ENCODE measurements at regions of chr12 and their contacts with region 1.

Region 1: GRCh38 chr12:55996715-55997534 is at the start of gene SUOX:
- DNase-seq: peak in 1 of 5 donors; percentile 6
- H3K4me3 ChIP-seq: peak within 1 kb of the TSS in 1 of 2 donors; percentile 18
- H3K4me3 Mint-ChIP-seq: peak within 1 kb of the TSS in 6 of 8 donors; percentile 2 to 54 (median 46)
- H3K27ac ChIP-seq: no peak within 1 kb of the TSS
- H3K27ac Mint-ChIP-seq: peak within 1 kb of the TSS in 6 of 7 donors; percentile 14 to 92 (median 62)
- H3K4me1 ChIP-seq: peaks cover 16% of the 10 kb centered on the region
- H3K4me1 Mint-ChIP-seq: peaks cover 10 to 23% (median 12%) of the 10 kb centered on the region in 4 donors
- H3K27me3 ChIP-seq: no peaks in the 10 kb centered on the region
- H3K27me3 Mint-ChIP-seq: peaks cover 0 to 1% of the 10 kb centered on the region in 2 donors
- total RNA-seq, gene SUOX: 5.4 to 5.9 TPM

Region 2: GRCh38 chr12:55982319-55982936 is 14.5 kb before region 1 on chr12:
- CTCF ChIA-PET with region 1: interaction called, 36 read pairs
- POLR2A ChIA-PET with region 1: interaction called, 4 read pairs
- intact Hi-C with region 1: no loop called
- DNase-seq: no peak
- H3K4me3 ChIP-seq: no peak overlapping the region
- H3K4me3 Mint-ChIP-seq: no peak overlapping the region
- H3K27ac ChIP-seq: no peak overlapping the region
- H3K27ac Mint-ChIP-seq: peak overlapping the region in 3 of 7 donors; percentile 10 to 56 (median 42)
- H3K4me1 ChIP-seq: peaks cover 8% of the 10 kb centered on the region
- H3K4me1 Mint-ChIP-seq: peaks cover 15 to 29% (median 18%) of the 10 kb centered on the region in 4 donors
- H3K27me3 ChIP-seq: no peaks in the 10 kb centered on the region
- H3K27me3 Mint-ChIP-seq: no peaks in the 10 kb centered on the region

Region 3: DNA sequence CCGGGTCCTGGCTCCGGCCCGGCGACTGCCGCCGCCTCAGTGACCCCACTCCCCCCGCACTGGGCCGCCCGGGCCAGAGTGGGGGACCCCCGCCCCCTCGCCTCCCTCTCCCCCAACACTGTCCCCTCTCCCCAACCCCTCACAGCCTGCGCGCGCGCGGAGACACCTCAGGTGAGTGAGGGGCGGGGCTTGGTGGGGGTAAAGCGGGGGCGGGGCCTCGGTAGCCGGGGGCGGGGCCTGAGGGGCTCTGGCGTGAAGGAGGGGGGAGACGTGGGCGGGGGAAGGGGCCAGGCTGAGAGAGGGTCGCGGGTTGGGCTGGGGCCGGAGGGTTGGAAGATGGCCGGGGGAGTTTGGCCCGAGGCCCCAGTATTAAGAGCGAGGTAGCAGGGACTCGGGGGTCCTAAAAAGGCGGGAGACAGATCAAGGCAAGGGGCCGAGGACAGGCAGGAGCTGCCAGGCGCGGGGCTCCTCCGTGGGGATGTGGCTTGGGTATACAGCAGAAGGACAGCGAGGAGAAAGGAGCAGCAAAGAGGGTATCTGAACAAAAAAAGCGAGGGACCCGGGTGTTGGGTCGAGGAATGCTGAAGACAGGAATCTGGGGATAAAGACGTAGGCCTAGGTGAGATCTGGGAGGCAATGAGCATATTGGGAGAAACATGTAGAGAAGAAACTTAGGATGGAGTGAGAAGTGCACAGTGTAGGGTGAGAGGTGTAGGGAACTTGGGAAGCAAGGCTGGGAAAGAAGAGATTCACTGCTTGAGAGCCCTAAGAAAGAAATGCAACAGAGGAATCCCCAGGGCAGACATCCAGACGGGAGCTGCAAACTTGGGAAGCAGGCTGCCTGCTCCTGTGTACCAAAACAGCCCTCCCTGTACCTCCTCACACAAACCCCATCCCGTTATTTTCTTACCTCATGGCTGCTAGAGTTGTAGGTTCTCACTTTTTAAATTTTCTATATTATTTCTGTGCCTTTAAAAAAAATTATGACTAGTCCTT is 10.9 kb after region 1 on chr12:
- CTCF ChIA-PET with region 1: interaction called, 14 read pairs
- POLR2A ChIA-PET with region 1: interaction called, 9 read pairs
- intact Hi-C with region 1: no loop called
- DNase-seq: peak; percentile 59 to 67 (median 62)
- H3K4me3 ChIP-seq: peak overlapping the region; percentile 38 to 61
- H3K4me3 Mint-ChIP-seq: peak overlapping the region; percentile 89 to 95 (median 92)
- H3K27ac ChIP-seq: peak overlapping the region; percentile 49
- H3K27ac Mint-ChIP-seq: peak overlapping the region; percentile 83 to 97 (median 92)
- H3K4me1 ChIP-seq: peaks cover 10% of the 10 kb centered on the region
- H3K4me1 Mint-ChIP-seq: peaks cover 10 to 28% (median 22%) of the 10 kb centered on the region in 4 donors
- H3K27me3 ChIP-seq: no peaks in the 10 kb centered on the region
- H3K27me3 Mint-ChIP-seq: no peaks in the 10 kb centered on the region

Region 4: DNA sequence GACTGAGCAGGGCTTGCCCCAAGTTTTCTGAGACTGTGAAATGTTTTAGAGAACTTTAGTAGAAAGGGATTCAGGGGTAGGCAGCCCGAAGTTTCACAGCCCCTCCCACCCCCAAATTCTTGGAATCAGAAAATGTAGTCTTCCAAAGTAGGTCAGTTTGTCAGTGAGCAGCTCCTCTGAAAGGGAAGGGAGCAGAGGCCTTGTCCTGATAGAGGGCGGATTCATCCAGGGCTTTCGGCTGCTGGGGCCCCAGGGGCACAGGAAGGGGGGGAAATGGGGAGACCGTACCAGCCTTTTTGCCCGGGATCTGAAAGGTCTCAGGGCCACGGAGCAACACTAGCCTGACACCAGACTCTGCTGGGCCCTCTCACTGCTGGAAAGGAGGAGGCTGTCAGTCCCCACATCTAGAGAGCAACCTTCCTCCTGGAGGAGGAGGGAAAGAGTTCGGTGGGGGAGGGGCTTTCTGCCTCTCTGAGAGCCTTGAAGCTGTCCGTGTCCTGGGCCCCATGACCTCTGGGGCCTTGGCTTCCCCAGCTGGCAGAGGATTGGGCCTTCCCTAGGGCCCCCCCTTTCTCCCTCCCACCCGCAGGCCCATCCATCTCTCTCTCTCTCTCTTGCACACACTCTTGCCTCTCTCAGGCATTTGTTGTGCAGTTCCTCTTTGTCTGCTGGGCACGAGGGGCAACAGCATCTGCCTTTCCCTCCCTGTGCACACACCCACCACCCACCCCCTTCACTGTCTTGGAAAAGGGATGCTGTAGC is 23.7 kb after region 1 on chr12 and contains the start of gene IKZF4:
- CTCF ChIA-PET with region 1: interaction called, 16 read pairs
- POLR2A ChIA-PET with region 1: interaction called, 4 read pairs
- intact Hi-C with region 1: no loop called
- DNase-seq: no peak
- H3K4me3 ChIP-seq: peak within 1 kb of the TSS; percentile 34 to 51
- H3K4me3 Mint-ChIP-seq: peak within 1 kb of the TSS; percentile 89 to 94 (median 90)
- H3K27ac ChIP-seq: peak within 1 kb of the TSS; percentile 55
- H3K27ac Mint-ChIP-seq: peak within 1 kb of the TSS; percentile 65 to 94 (median 92)
- H3K4me1 ChIP-seq: peaks cover 32% of the 10 kb centered on the region
- H3K4me1 Mint-ChIP-seq: peaks cover 16 to 36% (median 26%) of the 10 kb centered on the region in 4 donors
- H3K27me3 ChIP-seq: no peaks in the 10 kb centered on the region
- H3K27me3 Mint-ChIP-seq: no peaks in the 10 kb centered on the region
- total RNA-seq, gene IKZF4: 7.2 to 7.9 TPM

Region 5: DNA sequence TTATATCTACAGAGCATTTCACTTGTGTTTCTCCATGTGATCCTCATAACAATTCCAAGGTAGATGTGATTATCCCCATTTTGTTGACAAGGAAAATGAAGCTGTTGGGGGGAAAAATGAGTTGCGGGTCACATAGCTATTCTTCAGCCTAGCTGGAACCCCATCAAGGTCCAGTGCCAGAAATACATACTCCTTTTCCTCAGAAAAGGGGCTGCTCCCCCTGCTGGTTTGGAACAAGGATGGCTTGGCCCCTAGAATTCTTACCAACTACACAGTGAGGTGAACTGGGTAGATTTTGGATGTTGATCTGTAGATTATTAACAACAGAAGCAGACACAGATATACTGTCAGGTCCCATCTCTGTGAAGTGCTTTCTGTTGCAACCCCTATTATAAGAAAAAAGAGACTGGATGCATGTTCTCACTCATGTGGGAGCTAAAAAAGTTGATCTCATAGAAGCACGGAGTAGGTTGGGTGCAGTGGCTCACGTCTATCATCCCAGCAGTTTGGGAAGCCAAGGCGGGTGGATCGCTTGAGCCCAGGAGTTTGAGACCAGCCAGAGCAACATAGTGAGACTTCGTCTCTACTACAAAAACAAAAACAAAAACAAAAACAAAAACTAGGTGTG is 32.9 kb after region 1 on chr12:
- CTCF ChIA-PET with region 1: interaction called, 61 read pairs
- POLR2A ChIA-PET with region 1: interaction called, 7 read pairs
- intact Hi-C with region 1: loop called (anchors 1 kb)
- DNase-seq: peak in 4 of 5 donors; percentile 43 to 49 (median 46)
- H3K4me3 ChIP-seq: no peak overlapping the region
- H3K4me3 Mint-ChIP-seq: no peak overlapping the region
- H3K27ac ChIP-seq: no peak overlapping the region
- H3K27ac Mint-ChIP-seq: peak overlapping the region in 3 of 7 donors; percentile 3 to 68 (median 13)
- H3K4me1 ChIP-seq: peaks cover 7% of the 10 kb centered on the region
- H3K4me1 Mint-ChIP-seq: peaks cover 5 to 20% (median 7%) of the 10 kb centered on the region in 4 donors
- H3K27me3 ChIP-seq: no peaks in the 10 kb centered on the region
- H3K27me3 Mint-ChIP-seq: no peaks in the 10 kb centered on the region

Region 6: GRCh38 chr12:56041552-56042429 is 44.9 kb after region 1 on chr12 and contains the start of gene RPS26:
- CTCF ChIA-PET with region 1: interaction called, 42 read pairs
- POLR2A ChIA-PET with region 1: interaction called, 9 read pairs
- intact Hi-C with region 1: loop called (anchors 1 kb)
- DNase-seq: peak; percentile 95 to 98 (median 96)
- H3K4me3 ChIP-seq: peak within 1 kb of the TSS; percentile 94 to 97
- H3K4me3 Mint-ChIP-seq: peak within 1 kb of the TSS; percentile 98 to 100 (median 99)
- H3K27ac ChIP-seq: peak within 1 kb of the TSS; percentile 87
- H3K27ac Mint-ChIP-seq: peak within 1 kb of the TSS; percentile 96 to 100 (median 99)
- H3K4me1 ChIP-seq: peaks cover 23% of the 10 kb centered on the region
- H3K4me1 Mint-ChIP-seq: peaks cover 15 to 45% (median 23%) of the 10 kb centered on the region in 4 donors
- H3K27me3 ChIP-seq: no peaks in the 10 kb centered on the region
- H3K27me3 Mint-ChIP-seq: no peaks in the 10 kb centered on the region
- total RNA-seq, gene RPS26: 55.6 to 55.8 TPM

Region 7: GRCh38 chr12:57549909-57550640 is 1553.2 kb after region 1 on chr12 and contains the start of gene KIF5A:
- CTCF ChIA-PET with region 1: no interaction called
- POLR2A ChIA-PET with region 1: no interaction called
- intact Hi-C with region 1: no loop called
- DNase-seq: peak; percentile 41 to 58 (median 47)
- H3K4me3 ChIP-seq: peak within 1 kb of the TSS; percentile 31 to 56
- H3K4me3 Mint-ChIP-seq: peak within 1 kb of the TSS; percentile 64 to 79 (median 76)
- H3K27ac ChIP-seq: no peak within 1 kb of the TSS
- H3K27ac Mint-ChIP-seq: peak within 1 kb of the TSS in 3 of 7 donors; percentile 53 to 76 (median 62)
- H3K4me1 ChIP-seq: peaks cover 37% of the 10 kb centered on the region
- H3K4me1 Mint-ChIP-seq: peaks cover 23 to 48% (median 31%) of the 10 kb centered on the region in 4 donors
- H3K27me3 ChIP-seq: no peaks in the 10 kb centered on the region
- H3K27me3 Mint-ChIP-seq: peaks cover 2 to 7% of the 10 kb centered on the region in 2 donors
- total RNA-seq, gene KIF5A: 0.96 to 1.00 TPM

Measured in CD4-positive, alpha-beta memory T cell (primary cell).